ENCODE measurements at regions of chr2 and their contacts with region 1.

Region 1: DNA sequence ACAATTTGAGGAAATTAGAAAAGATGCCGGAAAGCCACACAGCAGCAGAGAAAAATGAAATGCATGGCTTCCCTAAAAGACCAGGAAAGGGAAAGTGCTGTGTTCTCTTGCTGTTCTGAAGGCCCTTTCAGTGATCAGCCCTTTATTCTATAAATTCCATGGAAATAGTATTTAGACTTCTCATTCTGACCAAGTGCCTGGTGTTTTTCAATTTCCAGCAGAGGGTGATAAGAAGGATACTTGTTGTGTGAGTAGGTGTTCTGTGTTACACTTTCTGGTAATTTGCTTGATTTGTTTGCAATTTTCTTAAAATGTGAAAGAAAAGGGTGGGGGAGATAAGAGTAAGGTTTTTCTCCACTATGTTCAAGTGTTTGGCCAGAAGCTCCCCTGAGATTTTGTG is 504.5 kb downstream of the IRS1 start:
- DNase-seq: no peak
- ATAC-seq: no peak; the same call in 1 of the 2 replicates
- H3K4me3 ChIP-seq: no peak overlapping the region
- H3K27ac ChIP-seq: no peak overlapping the region
- H3K4me1 ChIP-seq: no peaks in the 10 kb centered on the region
- H3K27me3 ChIP-seq: no peaks in the 10 kb centered on the region
- CTCF ChIP-seq: no peak
- POLR2A ChIP-seq: no peak
- RAD21 ChIP-seq: no peak

Region 2: DNA sequence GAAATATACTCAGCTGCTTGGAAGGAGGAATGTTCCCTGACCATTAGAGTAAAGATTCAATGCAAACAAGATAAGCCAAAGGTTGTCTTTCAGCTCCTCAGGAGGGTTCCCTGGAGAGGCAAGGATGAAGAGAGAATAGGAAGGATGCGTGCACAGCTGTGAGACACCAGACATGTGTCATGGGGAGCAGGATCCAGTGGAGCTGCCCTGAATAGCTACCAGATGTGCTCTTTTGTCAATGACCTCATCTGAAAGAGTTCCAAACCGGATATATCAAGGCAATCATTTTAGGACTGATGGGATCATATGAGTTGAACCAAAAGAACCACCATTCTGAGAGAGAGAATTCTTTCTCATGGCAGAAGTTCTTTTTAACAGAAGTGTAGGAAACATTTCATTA is 13.9 kb after region 1 on chr2:
- CTCF ChIA-PET with region 1: no interaction called
- POLR2A ChIA-PET with region 1: no interaction called
- dilution Hi-C with region 1: no loop called
- in situ Hi-C with region 1: no loop called
- intact Hi-C with region 1: loop called (anchors 1 kb)
- DNase-seq: peak; percentile 76
- ATAC-seq: no peak
- H3K4me3 ChIP-seq: no peak overlapping the region
- H3K27ac ChIP-seq: peak overlapping the region; percentile 55; the same call in 1 of the 2 replicates
- H3K4me1 ChIP-seq: peaks cover 5% of the 10 kb centered on the region; the same call in 1 of the 2 replicates
- H3K27me3 ChIP-seq: no peaks in the 10 kb centered on the region
- CTCF ChIP-seq: no peak
- POLR2A ChIP-seq: no peak
- RAD21 ChIP-seq: no peak

Region 3: DNA sequence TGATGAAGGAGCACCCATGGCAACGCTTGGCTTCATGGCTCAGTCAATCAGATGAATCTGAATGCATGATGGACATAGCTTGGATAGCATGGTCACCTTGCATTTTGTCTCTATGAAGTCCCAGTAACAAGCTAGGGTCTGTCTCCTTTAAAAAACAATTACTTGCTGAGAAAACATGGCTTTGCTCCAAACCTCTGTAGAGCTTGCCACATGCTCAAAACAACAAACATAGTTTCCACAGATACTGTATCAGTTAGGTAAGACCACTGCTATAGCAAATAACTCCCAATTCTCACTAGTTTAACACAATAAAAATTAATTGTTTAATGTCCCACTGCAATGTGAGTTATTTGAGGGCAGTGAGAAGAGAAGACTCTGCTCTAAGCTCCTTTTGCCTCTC is 103.5 kb after region 1 on chr2:
- CTCF ChIA-PET with region 1: no interaction called
- POLR2A ChIA-PET with region 1: no interaction called
- dilution Hi-C with region 1: no loop called
- in situ Hi-C with region 1: no loop called
- intact Hi-C with region 1: loop called (anchors 5 kb)
- DNase-seq: peak; percentile 20
- ATAC-seq: no peak
- H3K4me3 ChIP-seq: no peak overlapping the region
- H3K27ac ChIP-seq: no peak overlapping the region
- H3K4me1 ChIP-seq: no peaks in the 10 kb centered on the region
- H3K27me3 ChIP-seq: no peaks in the 10 kb centered on the region
- CTCF ChIP-seq: no peak
- POLR2A ChIP-seq: no peak
- RAD21 ChIP-seq: no peak

Measured in IMR-90 (cell line).